ENCODE measurements at regions of chr15 and their contacts with region 1.

Region 1: GRCh38 chr15:64452988-64453688 is 7.2 kb upstream of the ZNF609 start:
- DNase-seq: peak; percentile 33
- ATAC-seq: no peak
- H3K4me3 ChIP-seq: no peak overlapping the region
- H3K27ac ChIP-seq: no peak overlapping the region
- H3K4me1 ChIP-seq: peaks cover 14% of the 10 kb centered on the region
- H3K27me3 ChIP-seq: no peaks in the 10 kb centered on the region
- CTCF ChIP-seq: no peak
- POLR2A ChIP-seq: no peak
- RAD21 ChIP-seq: no peak

Region 2: DNA sequence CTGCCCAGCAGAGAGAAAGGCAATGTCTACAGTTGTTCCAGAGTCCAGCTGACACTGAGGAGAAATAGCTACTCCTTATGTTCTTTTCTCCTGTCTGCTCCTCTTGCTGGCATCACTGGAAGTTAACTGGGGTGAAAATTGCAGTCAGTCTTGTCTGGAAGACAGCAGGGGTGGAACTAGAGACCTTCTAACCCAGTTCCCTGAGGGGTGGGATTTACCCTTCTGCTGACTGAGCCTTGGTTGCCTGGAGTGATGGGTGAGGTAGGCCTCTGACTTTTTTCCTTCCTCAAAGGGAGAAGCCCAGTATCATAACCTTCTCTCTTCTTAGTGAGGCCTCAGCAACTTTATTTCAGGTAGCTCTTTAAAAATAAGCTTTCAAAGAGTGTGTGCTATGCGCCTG is 23.4 kb after region 1 on chr15:
- CTCF ChIA-PET with region 1: interaction called, 13 read pairs
- POLR2A ChIA-PET with region 1: no interaction called
- dilution Hi-C with region 1: no loop called
- in situ Hi-C with region 1: no loop called
- intact Hi-C with region 1: no loop called
- DNase-seq: no peak
- ATAC-seq: no peak
- H3K4me3 ChIP-seq: no peak overlapping the region
- H3K27ac ChIP-seq: no peak overlapping the region
- H3K4me1 ChIP-seq: peaks cover 3% of the 10 kb centered on the region; the same call in 1 of the 2 replicates
- H3K27me3 ChIP-seq: no peaks in the 10 kb centered on the region
- CTCF ChIP-seq: no peak
- POLR2A ChIP-seq: no peak
- RAD21 ChIP-seq: no peak

Region 3: GRCh38 chr15:64645995-64646394 is 192.9 kb after region 1 on chr15:
- CTCF ChIA-PET with region 1: no interaction called
- POLR2A ChIA-PET with region 1: no interaction called
- dilution Hi-C with region 1: no loop called
- in situ Hi-C with region 1: no loop called
- intact Hi-C with region 1: no loop called
- DNase-seq: no peak
- ATAC-seq: no peak
- H3K4me3 ChIP-seq: no peak overlapping the region
- H3K27ac ChIP-seq: no peak overlapping the region
- H3K4me1 ChIP-seq: no peaks in the 10 kb centered on the region; the same call in 1 of the 2 replicates
- H3K27me3 ChIP-seq: no peaks in the 10 kb centered on the region
- CTCF ChIP-seq: no peak
- POLR2A ChIP-seq: no peak
- RAD21 ChIP-seq: no peak